ENCODE measurements at regions of chr5 and their contacts with region 1.

Region 1: DNA sequence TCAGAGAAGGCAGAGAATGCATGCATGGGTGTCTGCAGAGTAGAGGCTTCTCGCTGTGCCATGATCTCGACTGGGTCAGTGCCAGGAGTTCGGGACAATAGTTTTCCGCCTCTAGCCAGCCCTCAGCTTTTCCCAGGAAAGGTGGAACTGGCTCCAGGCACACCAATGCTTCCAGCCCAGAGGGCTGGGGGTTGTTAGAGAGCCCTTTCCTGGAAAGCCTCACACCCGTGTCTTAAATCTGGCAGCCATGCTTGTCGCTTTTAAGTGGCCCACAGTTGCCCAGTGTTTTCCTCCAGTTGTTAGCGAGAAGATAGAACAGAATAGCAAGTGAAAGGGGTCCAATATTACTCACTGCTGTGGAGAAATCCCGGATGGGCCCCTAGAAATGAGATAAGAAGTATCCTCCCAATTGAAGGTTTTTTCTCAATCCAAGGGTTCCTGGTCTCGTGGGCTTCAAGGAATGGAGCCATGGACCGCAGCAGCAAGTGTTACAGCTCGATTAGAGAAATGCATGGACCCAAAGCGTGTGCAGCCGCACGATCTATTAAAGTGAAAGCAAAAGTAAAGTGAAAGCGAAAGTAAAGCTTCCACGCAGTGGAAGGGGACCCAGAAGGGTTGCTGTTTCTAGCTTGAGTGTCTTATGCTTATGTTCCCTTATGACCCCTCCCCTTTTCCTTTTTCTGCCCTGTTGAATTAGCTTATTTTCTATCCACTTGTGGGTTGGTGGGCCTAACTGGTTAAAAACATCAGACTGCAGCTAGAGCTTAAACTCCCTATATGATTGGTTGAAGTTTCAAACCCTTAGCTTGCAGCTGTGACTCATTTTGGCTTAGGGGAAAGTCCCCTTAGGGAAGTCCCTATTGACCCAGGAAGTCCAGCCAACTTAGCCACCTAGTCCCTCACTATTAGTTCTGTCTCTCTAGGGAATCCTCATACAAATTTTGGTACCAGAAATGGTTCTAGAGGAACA is 1111.7 kb downstream of the TAF11L14 start:
- DNase-seq: peak; percentile 40
- H3K4me3 Mint-ChIP-seq: peak overlapping the region; percentile 81
- H3K27ac Mint-ChIP-seq: peak overlapping the region; percentile 87
- H3K4me1 Mint-ChIP-seq: peaks cover 32% of the 10 kb centered on the region
- H3K27me3 Mint-ChIP-seq: no peaks in the 10 kb centered on the region

Region 2: DNA sequence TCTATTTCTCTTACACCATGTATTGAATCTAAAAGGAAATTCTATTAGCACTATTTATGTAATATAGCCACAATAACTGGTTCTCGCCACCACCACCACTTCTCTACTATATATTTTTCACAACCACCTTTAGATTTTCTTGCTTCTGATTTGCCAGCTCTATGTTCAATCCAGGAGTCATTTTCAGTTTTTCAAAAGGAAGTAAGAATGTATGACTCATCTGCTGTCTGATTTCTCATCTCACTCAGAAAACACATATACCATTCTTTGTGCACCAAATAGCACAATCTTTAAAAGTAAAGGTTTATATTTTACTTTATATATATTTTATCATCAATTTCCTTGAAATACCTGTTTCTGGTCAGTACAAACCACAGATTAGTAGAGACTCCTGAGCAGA is 15.9 kb after region 1 on chr5:
- CTCF ChIA-PET with region 1: interaction called, 3 read pairs
- intact Hi-C with region 1: loop called (anchors 1 kb)
- DNase-seq: no peak
- H3K4me3 Mint-ChIP-seq: no peak overlapping the region
- H3K27ac Mint-ChIP-seq: no peak overlapping the region
- H3K4me1 Mint-ChIP-seq: peaks cover 4% of the 10 kb centered on the region
- H3K27me3 Mint-ChIP-seq: peaks cover 1% of the 10 kb centered on the region

Region 3: DNA sequence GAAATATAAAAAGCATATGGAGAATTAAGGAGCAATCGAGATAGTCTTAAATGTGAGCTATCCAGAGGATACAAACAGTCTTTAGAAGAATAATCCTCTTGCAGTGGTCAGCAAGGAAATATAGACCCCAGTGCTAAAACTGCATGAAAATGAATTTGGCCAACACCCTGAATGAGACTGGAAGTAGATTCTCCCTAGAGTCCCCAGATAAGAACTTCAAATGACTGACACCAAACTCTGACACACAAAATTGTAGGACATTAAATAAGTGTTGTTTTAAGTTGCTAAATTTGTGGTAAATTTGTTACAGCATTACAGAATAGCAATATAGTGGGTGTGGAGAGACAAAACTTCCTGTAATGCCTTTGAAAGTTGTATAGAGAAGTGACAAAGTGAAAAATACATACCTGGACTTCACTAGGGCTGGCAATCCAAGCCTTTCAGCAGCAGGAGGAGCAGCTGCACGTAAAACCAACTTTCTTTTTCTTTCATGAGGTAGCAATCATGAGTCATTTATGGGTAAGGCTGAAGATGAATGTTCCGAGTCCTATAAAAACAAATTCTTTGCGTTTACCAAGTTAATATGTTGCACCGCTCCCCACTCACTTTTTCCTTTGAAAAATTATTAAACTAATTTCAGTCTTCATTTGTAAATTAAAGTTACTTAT is 26.4 kb after region 1 on chr5:
- CTCF ChIA-PET with region 1: no interaction called
- intact Hi-C with region 1: no loop called
- DNase-seq: peak; percentile 34
- H3K4me3 Mint-ChIP-seq: no peak overlapping the region
- H3K27ac Mint-ChIP-seq: no peak overlapping the region
- H3K4me1 Mint-ChIP-seq: peaks cover 6% of the 10 kb centered on the region
- H3K27me3 Mint-ChIP-seq: no peaks in the 10 kb centered on the region

Measured in activated naive CD4-positive, alpha-beta T cell treated with anti-CD3 and anti-CD28 coated beads for 36 hours (primary cell).